ENCODE measurements at regions of chr19 and their contacts with region 1.

Region 1: DNA sequence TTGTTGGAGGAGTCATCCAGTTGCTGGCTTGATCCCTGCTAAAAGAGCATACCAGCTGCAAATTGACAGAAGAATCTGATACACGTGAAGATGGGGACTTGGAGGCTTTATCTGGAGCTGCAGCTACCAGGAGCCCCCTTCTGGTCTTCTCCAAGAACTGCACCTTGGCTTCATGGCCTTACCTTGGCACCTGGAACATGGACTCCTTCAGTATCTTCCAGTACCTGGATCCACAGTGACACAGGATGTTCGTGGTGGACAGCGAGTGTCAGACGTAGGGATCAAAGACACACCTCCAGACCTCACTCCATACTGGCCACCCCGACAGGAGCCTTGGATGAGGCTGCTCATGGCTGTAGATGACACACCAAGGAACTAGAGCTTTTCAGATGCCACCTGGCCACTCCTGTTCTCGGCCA is 9.9 kb upstream of the ACSBG2 start:
- DNase-seq: peak; percentile 65
- H3K4me3 ChIP-seq: no peak overlapping the region
- H3K27ac ChIP-seq: no peak overlapping the region
- H3K4me1 ChIP-seq: no peaks in the 10 kb centered on the region
- H3K27me3 ChIP-seq: no peaks in the 10 kb centered on the region
- CTCF ChIP-seq: peak; percentile 54 to 73 (median 70)
- POLR2A ChIP-seq: no peak

Region 2: GRCh38 chr19:6048808-6049405 is 76.7 kb before region 1 on chr19:
- intact Hi-C with region 1: loop called (anchors 5 kb)
- DNase-seq: peak; percentile 85
- H3K4me3 ChIP-seq: no peak overlapping the region
- H3K27ac ChIP-seq: no peak overlapping the region
- H3K4me1 ChIP-seq: peaks cover 2% of the 10 kb centered on the region
- H3K27me3 ChIP-seq: no peaks in the 10 kb centered on the region
- CTCF ChIP-seq: peak in 2 of 3 experiments; percentile 58 to 78
- POLR2A ChIP-seq: no peak

Measured in testis (tissue), 5 donors.